Posterior vena cava (tissue), 2 donors: ENCODE measurements at regions of chr1 and their contacts with region 1.

Region 1: GRCh38 chr1:197327776-197328364 is 59.8 kb downstream of the CRB1 start:
- DNase-seq: no peak

Region 2: GRCh38 chr1:197924516-197925123 is 596.8 kb after region 1 on chr1:
- intact Hi-C with region 1: loop called in 1 of 2 experiments (anchors 10 kb)
- DNase-seq: no peak